CD8-positive, alpha-beta T cell (primary cell): ENCODE measurements at regions of chr7 and their contacts with region 1.

Region 1: GRCh38 chr7:129980667-129981066 is 27.9 kb upstream of the UBE2H start:
- DNase-seq: no peak
- ATAC-seq: no peak
- H3K4me3 ChIP-seq: no peak overlapping the region
- H3K4me3 Mint-ChIP-seq: no peak overlapping the region
- H3K27ac ChIP-seq: no peak overlapping the region
- H3K27ac Mint-ChIP-seq: no peak overlapping the region
- H3K4me1 ChIP-seq: no peaks in the 10 kb centered on the region
- H3K4me1 Mint-ChIP-seq: no peaks in the 10 kb centered on the region
- H3K27me3 ChIP-seq: peaks cover 0 to 2% of the 10 kb centered on the region in 2 experiments
- H3K27me3 Mint-ChIP-seq: peaks cover 6% of the 10 kb centered on the region
- CTCF ChIP-seq: no peak

Region 2: DNA sequence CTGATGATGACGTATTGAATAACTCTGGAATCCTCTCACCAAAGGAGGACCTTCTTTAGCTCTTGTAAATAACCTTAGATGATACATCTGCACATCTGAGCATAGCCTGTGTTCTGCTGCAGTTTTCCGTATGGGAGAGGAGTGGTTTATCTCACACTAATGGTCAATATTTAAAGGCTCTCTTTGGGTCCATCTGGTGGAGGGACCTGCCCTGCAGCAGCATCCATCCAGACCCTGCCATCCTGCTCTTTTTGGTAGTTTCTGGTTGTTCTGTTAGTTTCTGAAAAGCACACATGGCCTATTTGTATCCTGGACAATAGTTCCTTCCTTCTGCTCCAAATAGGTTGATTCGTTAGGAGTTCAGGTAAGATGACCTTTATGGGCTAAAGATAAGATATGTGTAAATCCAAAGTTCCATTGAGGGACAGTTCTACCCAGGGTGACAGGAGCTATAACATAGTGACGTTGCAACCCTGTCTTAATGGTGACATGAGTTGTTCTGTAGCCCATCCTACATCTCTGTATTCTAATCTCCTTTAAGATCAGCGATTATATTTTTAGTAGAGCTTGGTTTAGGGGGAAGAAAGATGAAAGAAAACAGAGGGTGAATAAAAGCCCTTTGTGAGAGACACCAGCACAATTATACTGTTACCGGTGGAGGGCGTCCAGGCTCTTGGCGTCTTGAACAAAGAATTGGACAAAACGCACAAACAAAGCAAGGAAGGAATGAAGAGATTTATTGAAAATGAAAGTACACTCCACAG is 813.4 kb after region 1 on chr7:
- CTCF ChIA-PET with region 1: no interaction called
- POLR2A ChIA-PET with region 1: no interaction called
- intact Hi-C with region 1: loop called in 1 of 2 experiments (anchors 5 kb)
- DNase-seq: no peak
- ATAC-seq: no peak
- H3K4me3 ChIP-seq: no peak overlapping the region
- H3K4me3 Mint-ChIP-seq: no peak overlapping the region
- H3K27ac ChIP-seq: no peak overlapping the region
- H3K27ac Mint-ChIP-seq: no peak overlapping the region
- H3K4me1 ChIP-seq: no peaks in the 10 kb centered on the region
- H3K4me1 Mint-ChIP-seq: no peaks in the 10 kb centered on the region
- H3K27me3 ChIP-seq: no peaks in the 10 kb centered on the region
- H3K27me3 Mint-ChIP-seq: peaks cover 4% of the 10 kb centered on the region
- CTCF ChIP-seq: no peak